CD8-positive, alpha-beta memory T cell (primary cell): ENCODE measurements at regions of chrX and their contacts with region 1.

Region 1: GRCh38 chrX:19334945-19335626 is 8.6 kb upstream of the PDHA1 start:
- DNase-seq: peak in 2 of 5 donors; percentile 12 to 20
- H3K4me3 ChIP-seq: no peak overlapping the region
- H3K4me3 Mint-ChIP-seq: peak overlapping the region in 2 of 7 donors; percentile 12 to 64
- H3K27ac ChIP-seq: no peak overlapping the region
- H3K27ac Mint-ChIP-seq: peak overlapping the region in 1 of 8 donors; percentile 24
- H3K4me1 ChIP-seq: no peaks in the 10 kb centered on the region
- H3K4me1 Mint-ChIP-seq: peaks cover 0 to 1% (median 0%) of the 10 kb centered on the region in 3 donors
- H3K27me3 ChIP-seq: no peaks in the 10 kb centered on the region
- H3K27me3 Mint-ChIP-seq: peaks cover 5% of the 10 kb centered on the region in 2 donors

Region 2: GRCh38 chrX:18389968-18390367 is 945.1 kb before region 1 on chrX:
- CTCF ChIA-PET with region 1: interaction called, 11 read pairs
- POLR2A ChIA-PET with region 1: interaction called, 9 read pairs
- DNase-seq: no peak
- H3K4me3 ChIP-seq: no peak overlapping the region
- H3K4me3 Mint-ChIP-seq: no peak overlapping the region
- H3K27ac ChIP-seq: no peak overlapping the region
- H3K27ac Mint-ChIP-seq: no peak overlapping the region
- H3K4me1 ChIP-seq: no peaks in the 10 kb centered on the region
- H3K4me1 Mint-ChIP-seq: peaks cover 0 to 4% (median 4%) of the 10 kb centered on the region in 3 donors
- H3K27me3 ChIP-seq: no peaks in the 10 kb centered on the region
- H3K27me3 Mint-ChIP-seq: peaks cover 0 to 7% of the 10 kb centered on the region in 2 donors

Region 3: DNA sequence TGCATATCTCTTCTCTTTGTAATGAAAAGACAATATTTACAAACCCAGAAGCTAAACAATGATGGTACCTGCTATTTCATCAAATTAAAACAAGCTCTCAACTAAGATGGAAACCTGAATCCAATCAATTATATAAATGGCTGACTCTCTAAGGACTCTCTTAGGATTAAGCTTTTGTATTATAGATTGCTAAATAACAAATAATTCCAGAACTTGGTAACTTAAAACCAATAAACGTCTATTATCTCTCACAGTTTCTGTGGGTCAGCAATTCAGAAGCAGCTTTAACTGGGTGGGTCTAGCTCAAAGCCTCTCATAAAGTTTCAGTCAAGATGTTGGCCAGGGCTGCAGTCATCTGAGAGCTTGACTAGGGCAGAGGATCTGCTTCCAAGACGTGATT is 363.6 kb before region 1 on chrX:
- CTCF ChIA-PET with region 1: no interaction called
- POLR2A ChIA-PET with region 1: interaction called, 19 read pairs
- DNase-seq: no peak
- H3K4me3 ChIP-seq: no peak overlapping the region
- H3K4me3 Mint-ChIP-seq: no peak overlapping the region
- H3K27ac ChIP-seq: no peak overlapping the region
- H3K27ac Mint-ChIP-seq: no peak overlapping the region
- H3K4me1 ChIP-seq: no peaks in the 10 kb centered on the region
- H3K4me1 Mint-ChIP-seq: peaks cover 3 to 19% (median 4%) of the 10 kb centered on the region in 3 donors
- H3K27me3 ChIP-seq: no peaks in the 10 kb centered on the region
- H3K27me3 Mint-ChIP-seq: peaks cover 0 to 2% of the 10 kb centered on the region in 2 donors

Region 4: GRCh38 chrX:19479458-19479857 is 144.4 kb after region 1 on chrX:
- CTCF ChIA-PET with region 1: no interaction called
- POLR2A ChIA-PET with region 1: no interaction called
- DNase-seq: no peak
- H3K4me3 ChIP-seq: no peak overlapping the region
- H3K4me3 Mint-ChIP-seq: no peak overlapping the region
- H3K27ac ChIP-seq: no peak overlapping the region
- H3K27ac Mint-ChIP-seq: no peak overlapping the region
- H3K4me1 ChIP-seq: no peaks in the 10 kb centered on the region
- H3K4me1 Mint-ChIP-seq: peaks cover 0 to 2% (median 0%) of the 10 kb centered on the region in 3 donors
- H3K27me3 ChIP-seq: no peaks in the 10 kb centered on the region
- H3K27me3 Mint-ChIP-seq: no peaks in the 10 kb centered on the region